ENCODE measurements at regions of chr20 and their contacts with region 1.

Region 1: GRCh38 chr20:35303735-35304491 is 11.7 kb upstream of the FAM83C start:
- DNase-seq: peak; percentile 82
- ATAC-seq: peak; percentile 39
- H3K4me3 ChIP-seq: no peak overlapping the region
- H3K27ac ChIP-seq: peak overlapping the region; percentile 94
- H3K4me1 ChIP-seq: peaks cover 50 to 67% of the 10 kb centered on the region in 2 experiments
- H3K27me3 ChIP-seq: no peaks in the 10 kb centered on the region
- CTCF ChIP-seq: peak in 2 of 3 experiments; percentile 91 to 93; a peak in 4 of 6 replicates
- POLR2A ChIP-seq: no peak
- RAD21 ChIP-seq: no peak

Region 2: GRCh38 chr20:35146920-35147574 is 156.9 kb before region 1 on chr20 and contains the start of gene EDEM2:
- CTCF ChIA-PET with region 1: interaction called, 11 read pairs
- POLR2A ChIA-PET with region 1: interaction called, 3 read pairs
- RAD21 ChIA-PET with region 1: no interaction called
- intact Hi-C with region 1: no loop called
- DNase-seq: peak; percentile 92
- ATAC-seq: peak; percentile 90
- H3K4me3 ChIP-seq: peak within 1 kb of the TSS; percentile 77 to 98
- H3K27ac ChIP-seq: peak within 1 kb of the TSS; percentile 78
- H3K4me1 ChIP-seq: peaks cover 3 to 12% of the 10 kb centered on the region in 2 experiments; a peak in 2 of 4 replicates
- H3K27me3 ChIP-seq: no peaks in the 10 kb centered on the region
- CTCF ChIP-seq: no peak
- POLR2A ChIP-seq: peak; percentile 81
- RAD21 ChIP-seq: 0 out of 2 replicates have a peak, but pooled peaks have one; percentile 10
- total RNA-seq, gene EDEM2: 22.8 TPM

Region 3: DNA sequence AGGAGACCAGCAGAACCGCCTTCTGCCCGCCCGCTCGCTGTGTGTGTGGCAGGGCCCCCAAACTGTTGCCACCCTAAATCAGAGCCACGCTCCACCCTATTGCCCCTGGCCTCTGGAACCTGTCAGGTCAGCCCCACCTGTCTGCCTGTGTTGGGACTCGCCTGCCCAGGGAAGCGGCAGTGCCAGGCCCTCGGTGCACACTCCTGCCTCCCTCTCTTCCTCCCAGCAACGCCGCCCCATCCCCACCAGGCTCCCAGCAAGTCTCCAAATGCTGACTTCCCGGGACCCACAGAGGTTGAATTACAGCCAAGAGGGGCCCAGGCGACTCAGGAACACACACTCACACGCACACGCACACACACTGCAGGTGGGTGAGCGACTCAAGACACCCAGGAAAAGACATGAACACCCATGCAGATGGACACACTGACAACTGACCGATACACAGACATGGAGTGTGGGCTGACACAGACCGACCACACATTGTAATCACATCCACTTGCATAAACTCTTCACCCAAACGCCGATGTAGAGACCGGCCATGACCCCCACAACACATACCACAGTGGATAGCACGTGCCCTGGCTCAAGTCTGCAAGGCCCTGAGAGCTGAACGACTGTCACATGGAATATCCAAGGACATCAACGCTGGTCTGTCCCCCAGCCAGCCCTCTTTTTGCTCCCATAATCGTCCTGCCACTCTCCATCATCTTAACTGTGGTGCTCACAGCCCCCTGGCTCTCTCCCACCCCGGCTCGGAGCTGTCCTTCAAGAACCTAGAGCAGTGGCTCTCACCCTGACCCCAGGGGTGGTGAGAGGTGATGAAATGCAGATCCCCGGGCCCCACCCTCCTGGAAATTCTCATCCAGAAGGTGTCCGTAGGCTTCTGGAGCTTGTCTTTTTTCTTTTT is 11.3 kb before region 1 on chr20 and contains the start of gene FAM83C:
- CTCF ChIA-PET with region 1: interaction called, 27 read pairs
- POLR2A ChIA-PET with region 1: interaction called, 4 read pairs
- RAD21 ChIA-PET with region 1: no interaction called
- intact Hi-C with region 1: no loop called
- DNase-seq: no peak
- ATAC-seq: no peak
- H3K4me3 ChIP-seq: no peak within 1 kb of the TSS
- H3K27ac ChIP-seq: no peak within 1 kb of the TSS
- H3K4me1 ChIP-seq: peaks cover 5 to 10% of the 10 kb centered on the region in 2 experiments; a peak in 2 of 4 replicates
- H3K27me3 ChIP-seq: no peaks in the 10 kb centered on the region
- CTCF ChIP-seq: no peak
- POLR2A ChIP-seq: no peak
- RAD21 ChIP-seq: no peak
- total RNA-seq, gene FAM83C: not detected

Region 4: DNA sequence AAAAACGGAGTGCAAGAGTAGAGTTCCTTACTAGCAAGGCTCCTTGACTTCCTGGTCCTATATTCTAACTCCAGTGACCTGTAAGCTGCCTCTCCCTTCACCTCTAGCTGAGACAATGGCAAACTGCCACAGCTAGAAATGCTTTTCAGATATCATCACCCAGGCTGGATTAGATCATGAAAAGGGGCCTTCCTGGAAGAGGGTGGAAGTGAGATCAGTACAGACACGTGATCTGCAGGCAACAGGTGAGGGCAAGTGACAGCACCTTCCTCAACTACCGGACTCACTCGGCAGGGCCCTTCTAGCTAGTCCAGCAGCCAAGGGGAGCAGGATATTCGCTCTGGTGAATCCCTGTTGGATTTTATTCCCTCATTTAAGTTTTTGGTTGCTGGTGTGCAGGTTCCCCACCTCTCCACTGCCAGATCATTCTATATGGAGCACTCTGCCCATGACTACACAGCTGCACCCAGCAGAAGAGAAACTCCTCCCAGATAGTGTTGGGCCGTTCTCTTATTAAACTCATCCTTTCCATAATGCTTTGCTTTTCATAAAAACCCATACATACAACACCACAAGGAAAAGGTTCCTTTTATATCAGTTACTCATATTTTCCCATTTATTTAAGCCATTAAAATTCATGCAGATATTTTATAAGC is 14.7 kb after region 1 on chr20:
- CTCF ChIA-PET with region 1: interaction called, 41 read pairs
- POLR2A ChIA-PET with region 1: interaction called, 19 read pairs
- RAD21 ChIA-PET with region 1: interaction called in 1 of 2 experiments, 4 read pairs
- intact Hi-C with region 1: no loop called
- DNase-seq: peak; percentile 89
- ATAC-seq: peak; percentile 84
- H3K4me3 ChIP-seq: peak overlapping the region in 1 of 2 experiments; percentile 8; a peak in 3 of 4 replicates
- H3K27ac ChIP-seq: peak overlapping the region; percentile 69
- H3K4me1 ChIP-seq: peaks cover 55 to 85% of the 10 kb centered on the region in 2 experiments
- H3K27me3 ChIP-seq: no peaks in the 10 kb centered on the region
- CTCF ChIP-seq: no peak
- POLR2A ChIP-seq: no peak
- RAD21 ChIP-seq: no peak

Region 5: GRCh38 chr20:35329435-35330139 is 25.7 kb after region 1 on chr20:
- CTCF ChIA-PET with region 1: interaction called, 108 read pairs
- POLR2A ChIA-PET with region 1: interaction called, 5 read pairs
- RAD21 ChIA-PET with region 1: interaction called in 1 of 2 experiments, 26 read pairs
- intact Hi-C with region 1: loop called (anchors 1 kb)
- DNase-seq: no peak
- ATAC-seq: peak; percentile 83
- H3K4me3 ChIP-seq: no peak overlapping the region
- H3K27ac ChIP-seq: no peak overlapping the region
- H3K4me1 ChIP-seq: peaks cover 47 to 59% of the 10 kb centered on the region in 2 experiments
- H3K27me3 ChIP-seq: no peaks in the 10 kb centered on the region
- CTCF ChIP-seq: peak; percentile 83 to 98 (median 90)
- POLR2A ChIP-seq: no peak
- RAD21 ChIP-seq: peak; percentile 80

Region 6: DNA sequence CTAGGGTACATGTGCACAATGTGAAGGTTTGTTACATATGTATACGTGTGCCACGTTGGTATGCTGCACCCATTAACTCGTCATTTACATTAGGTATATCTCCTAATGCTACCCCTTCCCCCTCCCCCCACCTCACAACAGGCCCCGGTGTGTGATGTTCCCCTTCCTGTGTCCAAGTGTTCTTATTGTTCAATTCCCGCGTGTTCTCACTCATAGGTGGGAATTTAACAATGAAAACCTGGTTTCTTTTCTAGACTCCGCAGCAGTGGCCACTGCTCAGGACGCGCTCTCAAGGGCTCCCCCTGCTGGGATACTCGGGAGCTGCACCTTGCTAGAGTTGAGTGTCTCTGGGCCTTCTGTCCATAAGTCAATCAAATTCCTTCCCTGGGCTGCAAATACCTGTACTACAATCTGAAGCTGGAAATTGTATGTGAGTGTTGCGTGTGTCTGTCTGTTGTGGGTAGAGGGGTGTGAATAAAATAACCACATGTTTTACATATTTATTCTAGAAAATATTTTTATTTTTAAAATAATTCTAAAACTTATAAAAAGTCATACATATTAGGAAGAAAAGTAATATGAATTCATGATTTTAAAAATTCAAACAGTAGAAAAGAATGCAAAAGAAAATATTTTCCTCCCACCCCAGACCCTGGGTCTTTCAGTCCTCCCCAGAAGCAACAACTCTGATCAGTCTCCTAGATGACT is 143.3 kb after region 1 on chr20:
- CTCF ChIA-PET with region 1: interaction called, 34 read pairs
- POLR2A ChIA-PET with region 1: interaction called, 5 read pairs
- RAD21 ChIA-PET with region 1: interaction called, 3 read pairs
- intact Hi-C with region 1: no loop called
- DNase-seq: peak; percentile 68
- ATAC-seq: peak; percentile 95
- H3K4me3 ChIP-seq: peak overlapping the region; percentile 23 to 29; a peak in 3 of 4 replicates
- H3K27ac ChIP-seq: no peak overlapping the region
- H3K4me1 ChIP-seq: peaks cover 3 to 21% of the 10 kb centered on the region in 2 experiments; a peak in 3 of 4 replicates
- H3K27me3 ChIP-seq: no peaks in the 10 kb centered on the region
- CTCF ChIP-seq: peak; percentile 72 to 98 (median 90); a peak in 5 of 6 replicates
- POLR2A ChIP-seq: no peak
- RAD21 ChIP-seq: peak; percentile 63

Region 7: DNA sequence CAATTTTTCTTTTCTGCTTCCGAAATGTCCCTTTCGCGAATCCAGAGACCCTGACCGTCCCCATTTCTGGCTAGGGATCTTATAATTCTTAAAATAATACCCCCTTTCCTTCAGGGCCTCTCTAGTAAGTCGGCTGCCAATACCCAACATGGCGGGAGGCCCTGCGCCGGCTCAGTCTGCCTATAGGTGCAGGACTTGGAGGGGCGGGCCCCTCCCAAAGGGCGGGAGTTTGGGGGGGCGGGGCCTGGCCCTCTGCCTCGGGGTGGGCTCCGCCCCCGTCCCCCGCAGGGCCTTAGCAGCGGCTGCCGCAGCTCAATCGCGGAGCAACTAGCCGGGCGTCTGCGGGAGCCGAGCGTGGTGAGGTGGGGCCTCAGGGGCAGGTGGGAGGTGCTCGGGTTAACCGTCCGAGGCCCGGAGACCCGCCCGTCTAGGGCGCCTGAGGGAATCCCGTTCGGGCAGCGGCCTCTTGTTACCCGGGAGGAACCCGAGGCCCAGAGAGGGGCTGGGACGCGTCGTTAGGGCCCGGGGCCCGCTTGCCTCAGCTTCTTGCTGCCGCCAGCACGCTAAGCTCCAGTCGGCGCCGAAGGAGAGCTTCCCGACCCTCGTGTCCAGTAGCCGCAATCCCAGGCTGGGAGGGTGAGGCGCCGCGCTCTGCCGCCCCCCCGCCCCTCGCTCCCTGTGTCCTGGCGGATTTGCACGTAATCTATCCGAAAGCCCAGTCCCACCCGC is 151.1 kb after region 1 on chr20 and contains the start of gene CEP250:
- CTCF ChIA-PET with region 1: interaction called, 7 read pairs
- POLR2A ChIA-PET with region 1: interaction called, 11 read pairs
- RAD21 ChIA-PET with region 1: interaction called in 1 of 2 experiments, 4 read pairs
- intact Hi-C with region 1: no loop called
- DNase-seq: peak; percentile 89
- ATAC-seq: peak; percentile 93
- H3K4me3 ChIP-seq: peak within 1 kb of the TSS; percentile 83 to 93
- H3K27ac ChIP-seq: peak within 1 kb of the TSS; percentile 95
- H3K4me1 ChIP-seq: peaks cover 8 to 26% of the 10 kb centered on the region in 2 experiments; a peak in 3 of 4 replicates
- H3K27me3 ChIP-seq: no peaks in the 10 kb centered on the region
- CTCF ChIP-seq: no peak
- POLR2A ChIP-seq: peak; percentile 55
- RAD21 ChIP-seq: no peak
- total RNA-seq, gene CEP250: 42.3 TPM